A673 (cell line): ENCODE measurements at regions of chr7 and their contacts with region 1.

Region 1: GRCh38 chr7:121872831-121873288 is at the start of gene PTPRZ1:
- DNase-seq: peak; percentile 48
- H3K4me3 ChIP-seq: peak within 1 kb of the TSS; percentile 53
- H3K27ac ChIP-seq: no peak within 1 kb of the TSS
- H3K4me1 ChIP-seq: no peaks in the 10 kb centered on the region
- H3K27me3 ChIP-seq: peaks cover 88% of the 10 kb centered on the region
- CTCF ChIP-seq: no peak
- total RNA-seq, gene PTPRZ1: 0.20 and 0.58 TPM in 2 replicates

Region 2: GRCh38 chr7:121624958-121625357 is 247.9 kb before region 1 on chr7:
- CTCF ChIA-PET with region 1: no interaction called
- POLR2A ChIA-PET with region 1: no interaction called
- intact Hi-C with region 1: no loop called
- DNase-seq: no peak
- H3K4me3 ChIP-seq: no peak overlapping the region
- H3K27ac ChIP-seq: no peak overlapping the region
- H3K4me1 ChIP-seq: peaks cover 5% of the 10 kb centered on the region
- H3K27me3 ChIP-seq: no peaks in the 10 kb centered on the region
- CTCF ChIP-seq: no peak

Region 3: GRCh38 chr7:121853307-121853706 is 19.6 kb before region 1 on chr7:
- CTCF ChIA-PET with region 1: no interaction called
- POLR2A ChIA-PET with region 1: no interaction called
- intact Hi-C with region 1: loop called (anchors 1 kb)
- DNase-seq: no peak
- H3K4me3 ChIP-seq: no peak overlapping the region
- H3K27ac ChIP-seq: no peak overlapping the region
- H3K4me1 ChIP-seq: no peaks in the 10 kb centered on the region
- H3K27me3 ChIP-seq: peaks cover 8% of the 10 kb centered on the region
- CTCF ChIP-seq: no peak